CD8-positive, alpha-beta T cell (primary cell): ENCODE measurements at regions of chrX and their contacts with region 1.

Region 1: DNA sequence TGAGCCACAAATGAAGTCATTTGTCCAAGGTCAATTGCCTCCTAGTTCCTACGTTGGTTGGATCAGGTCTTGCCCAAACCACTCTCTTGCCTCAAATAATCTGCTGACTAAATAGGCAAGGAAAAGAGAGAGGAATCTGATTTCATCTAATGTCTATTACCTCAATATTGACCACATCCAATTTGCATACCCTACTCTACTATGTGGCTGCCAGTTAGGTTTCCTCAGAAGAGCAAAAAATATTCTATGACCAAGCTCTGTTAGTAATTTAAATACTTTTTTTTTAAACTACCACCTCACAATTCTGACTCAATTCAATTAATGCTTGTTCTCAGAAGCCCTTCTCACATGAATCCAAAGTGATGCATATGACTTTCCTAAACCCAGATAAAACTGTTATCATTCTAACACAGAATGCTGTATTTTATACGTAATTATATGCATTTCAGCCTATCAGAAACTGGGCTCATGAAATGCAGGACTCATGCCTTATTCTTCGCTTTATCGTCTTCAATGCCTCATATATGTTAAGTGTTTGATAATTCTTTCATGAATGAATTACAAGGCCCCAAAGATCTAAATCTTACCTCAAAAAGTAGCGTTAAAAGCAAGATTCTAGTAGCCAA is 98.6 kb downstream of the HUWE1 start:
- DNase-seq: no peak
- ATAC-seq: no peak
- H3K4me3 ChIP-seq: no peak overlapping the region
- H3K4me3 Mint-ChIP-seq: no peak overlapping the region
- H3K27ac ChIP-seq: no peak overlapping the region
- H3K27ac Mint-ChIP-seq: no peak overlapping the region
- H3K4me1 ChIP-seq: no peaks in the 10 kb centered on the region
- H3K4me1 Mint-ChIP-seq: peaks cover 3% of the 10 kb centered on the region
- H3K27me3 ChIP-seq: no peaks in the 10 kb centered on the region
- H3K27me3 Mint-ChIP-seq: no peaks in the 10 kb centered on the region
- CTCF ChIP-seq: no peak

Region 2: DNA sequence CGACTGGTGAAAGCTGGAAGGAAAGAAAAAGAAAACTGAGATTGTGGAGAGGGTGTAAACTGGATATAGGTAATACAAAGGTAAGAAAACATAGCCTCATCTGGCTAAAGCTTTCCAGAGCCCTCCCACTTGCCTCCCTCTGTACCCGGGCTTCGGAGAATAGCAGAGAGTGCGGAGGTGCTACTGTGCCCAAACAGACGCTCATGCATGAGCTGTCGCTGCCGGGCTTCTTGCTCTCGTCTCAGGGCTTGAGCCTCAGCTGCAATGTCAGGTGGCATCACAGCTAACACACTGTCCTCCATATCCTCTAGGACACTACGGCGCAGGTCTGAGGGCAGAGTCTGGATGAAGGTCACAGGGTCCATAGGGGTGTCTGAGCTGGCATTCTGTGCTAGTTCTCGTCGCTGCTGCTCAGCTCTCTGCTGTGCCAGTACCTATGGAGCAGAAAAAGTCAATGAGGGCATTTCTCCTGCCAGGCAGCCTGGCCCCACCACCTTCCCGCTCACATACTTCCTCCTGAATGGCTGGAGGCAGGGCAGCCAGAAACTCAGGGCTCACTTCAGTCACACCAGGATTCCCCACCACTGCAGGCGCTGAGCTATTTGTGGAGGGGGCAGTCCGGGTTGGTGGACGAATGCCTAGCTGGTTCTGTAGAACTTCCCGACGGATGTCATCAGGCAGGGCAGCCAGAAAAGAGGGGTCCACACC is 37.0 kb before region 1 on chrX:
- CTCF ChIA-PET with region 1: no interaction called
- POLR2A ChIA-PET with region 1: no interaction called
- intact Hi-C with region 1: loop called (anchors 5 to 10 kb)
- DNase-seq: no peak
- ATAC-seq: no peak
- H3K4me3 ChIP-seq: no peak overlapping the region
- H3K4me3 Mint-ChIP-seq: no peak overlapping the region
- H3K27ac ChIP-seq: no peak overlapping the region
- H3K27ac Mint-ChIP-seq: no peak overlapping the region
- H3K4me1 ChIP-seq: no peaks in the 10 kb centered on the region
- H3K4me1 Mint-ChIP-seq: no peaks in the 10 kb centered on the region
- H3K27me3 ChIP-seq: no peaks in the 10 kb centered on the region
- H3K27me3 Mint-ChIP-seq: no peaks in the 10 kb centered on the region
- CTCF ChIP-seq: no peak

Region 3: GRCh38 chrX:53561912-53562311 is 26.0 kb before region 1 on chrX:
- CTCF ChIA-PET with region 1: no interaction called
- POLR2A ChIA-PET with region 1: no interaction called
- intact Hi-C with region 1: loop called in 1 of 2 experiments (anchors 1 kb)
- DNase-seq: no peak
- ATAC-seq: no peak
- H3K4me3 ChIP-seq: no peak overlapping the region
- H3K4me3 Mint-ChIP-seq: no peak overlapping the region
- H3K27ac ChIP-seq: no peak overlapping the region
- H3K27ac Mint-ChIP-seq: no peak overlapping the region
- H3K4me1 ChIP-seq: no peaks in the 10 kb centered on the region
- H3K4me1 Mint-ChIP-seq: peaks cover 3% of the 10 kb centered on the region
- H3K27me3 ChIP-seq: no peaks in the 10 kb centered on the region
- H3K27me3 Mint-ChIP-seq: no peaks in the 10 kb centered on the region
- CTCF ChIP-seq: no peak